HepG2 (cell line): ENCODE measurements at regions of chr10 and their contacts with region 1.

Region 1: GRCh38 chr10:97234400-97234799 is 48.6 kb upstream of the SLIT1 start:
- DNase-seq: peak; percentile 23
- ATAC-seq: no peak
- H3K4me3 ChIP-seq: no peak overlapping the region
- H3K27ac ChIP-seq: no peak overlapping the region
- H3K4me1 ChIP-seq: no peaks in the 10 kb centered on the region
- H3K27me3 ChIP-seq: no peaks in the 10 kb centered on the region
- CTCF ChIP-seq: peak; percentile 60
- EP300 ChIP-seq: no peak
- POLR2A ChIP-seq: no peak
- RAD21 ChIP-seq: 0 out of 2 replicates have a peak, but pooled peaks have one; percentile 24

Region 2: DNA sequence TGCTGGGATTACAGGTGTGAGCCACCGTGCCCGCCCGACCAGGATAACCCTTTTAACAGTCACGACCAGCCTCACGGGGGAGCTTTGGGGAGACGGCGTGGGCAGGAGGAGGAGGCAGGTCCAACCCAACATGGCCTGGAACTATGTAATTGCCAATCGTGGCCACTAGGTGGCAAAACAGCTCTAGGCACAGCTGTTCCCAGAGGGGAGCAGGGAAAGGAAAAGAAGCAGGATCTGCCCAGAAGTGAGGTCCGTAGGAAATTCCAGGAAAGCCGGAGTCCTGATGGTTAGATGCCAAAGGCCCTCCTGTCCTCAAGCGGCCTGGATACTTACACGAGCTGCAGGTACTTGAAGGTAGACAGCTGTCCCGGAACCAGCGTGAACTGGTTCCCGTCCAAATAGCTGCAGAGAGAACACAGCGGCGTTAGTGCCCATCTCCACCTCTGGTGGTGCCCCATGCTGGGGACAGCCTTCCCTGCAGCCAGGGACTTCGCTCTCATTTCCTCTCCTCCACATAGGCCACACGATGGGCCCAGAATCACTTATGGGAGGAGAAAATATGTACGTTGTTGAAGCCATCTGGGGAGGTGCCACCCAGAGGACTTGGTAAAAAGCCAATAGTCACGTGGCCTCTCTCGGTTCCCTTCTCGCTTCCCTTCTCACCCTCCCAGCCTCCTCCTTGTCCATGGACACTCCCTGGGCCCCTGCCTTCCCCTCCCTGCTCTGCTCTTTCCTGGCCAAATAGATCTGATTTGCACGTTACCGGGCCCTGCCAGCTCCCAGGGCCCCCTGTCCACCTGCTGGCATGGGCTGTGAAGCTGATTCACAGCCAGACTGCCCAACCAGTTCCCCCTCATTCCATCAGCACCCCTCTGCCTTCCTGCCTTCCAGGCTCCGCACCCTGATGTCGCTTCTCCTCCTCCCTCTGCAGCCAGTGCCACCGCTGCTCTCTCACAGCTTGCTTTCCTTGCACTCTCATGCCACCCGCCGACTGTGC is 196.7 kb before region 1 on chr10:
- CTCF ChIA-PET with region 1: interaction called, 9 read pairs
- POLR2A ChIA-PET with region 1: no interaction called
- in situ Hi-C with region 1: no loop called
- intact Hi-C with region 1: loop called (anchors 1 kb)
- DNase-seq: peak; percentile 77
- ATAC-seq: peak; percentile 95
- H3K4me3 ChIP-seq: peak overlapping the region; percentile 22 to 65 (median 29)
- H3K27ac ChIP-seq: no peak overlapping the region
- H3K4me1 ChIP-seq: peaks cover 29% of the 10 kb centered on the region
- H3K27me3 ChIP-seq: peaks cover 3 to 28% of the 10 kb centered on the region in 2 experiments; a peak in 4 of 5 replicates
- CTCF ChIP-seq: peak; percentile 92
- EP300 ChIP-seq: no peak
- POLR2A ChIP-seq: no peak
- RAD21 ChIP-seq: peak; percentile 67

Region 3: GRCh38 chr10:97072851-97073665 is 161.3 kb before region 1 on chr10:
- CTCF ChIA-PET with region 1: interaction called, 19 read pairs
- POLR2A ChIA-PET with region 1: no interaction called
- in situ Hi-C with region 1: no loop called
- intact Hi-C with region 1: loop called (anchors 2 kb)
- DNase-seq: peak; percentile 55
- ATAC-seq: peak; percentile 79
- H3K4me3 ChIP-seq: no peak overlapping the region
- H3K27ac ChIP-seq: no peak overlapping the region
- H3K4me1 ChIP-seq: no peaks in the 10 kb centered on the region
- H3K27me3 ChIP-seq: peaks cover 12 to 64% of the 10 kb centered on the region in 2 experiments; a peak in 4 of 5 replicates
- CTCF ChIP-seq: peak; percentile 90
- EP300 ChIP-seq: no peak
- POLR2A ChIP-seq: no peak
- RAD21 ChIP-seq: peak; percentile 80